ENCODE measurements at regions of chr20 and their contacts with region 1.

Region 1: DNA sequence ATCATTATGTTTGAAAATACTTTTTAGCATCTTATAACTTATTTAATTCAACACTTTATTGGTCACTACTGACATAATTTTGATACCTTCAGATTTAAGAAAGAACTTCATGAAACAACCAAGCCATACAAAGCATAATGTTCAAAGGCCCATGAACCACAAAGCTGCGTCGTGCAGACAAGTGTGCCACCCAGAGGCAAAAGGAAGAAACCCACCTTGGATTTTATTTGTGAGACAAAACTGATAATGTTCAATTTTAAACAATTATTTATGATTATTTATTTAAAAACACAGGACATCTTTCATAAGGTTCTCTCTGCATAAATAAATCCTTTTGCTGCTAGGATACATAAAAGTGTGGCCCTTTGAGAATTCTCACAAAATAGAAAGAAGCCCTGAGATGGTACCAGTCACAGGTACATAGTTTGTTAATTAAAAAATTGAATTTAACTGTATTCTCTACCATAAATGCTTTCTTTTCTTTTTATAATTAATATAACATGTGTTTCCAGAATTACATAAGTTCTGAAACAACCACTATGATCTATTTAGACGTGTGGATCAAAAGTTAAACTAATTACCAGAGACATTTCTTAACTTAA is 143.7 kb downstream of the RALGAPA2 start:
- DNase-seq: no peak
- ATAC-seq: peak in 2 of 4 donors; percentile 41 to 56
- H3K4me3 ChIP-seq: no peak overlapping the region
- H3K27ac ChIP-seq: no peak overlapping the region
- H3K4me1 ChIP-seq: no peaks in the 10 kb centered on the region
- H3K27me3 ChIP-seq: no peaks in the 10 kb centered on the region
- CTCF ChIP-seq: peak; percentile 61

Region 2: GRCh38 chr20:20039752-20040387 is 528.8 kb before region 1 on chr20:
- intact Hi-C with region 1: loop called in 1 of 2 experiments (anchors 10 kb)
- DNase-seq: no peak
- ATAC-seq: no peak
- H3K4me3 ChIP-seq: no peak overlapping the region
- H3K27ac ChIP-seq: no peak overlapping the region
- H3K4me1 ChIP-seq: no peaks in the 10 kb centered on the region
- H3K27me3 ChIP-seq: no peaks in the 10 kb centered on the region
- CTCF ChIP-seq: no peak

Region 3: DNA sequence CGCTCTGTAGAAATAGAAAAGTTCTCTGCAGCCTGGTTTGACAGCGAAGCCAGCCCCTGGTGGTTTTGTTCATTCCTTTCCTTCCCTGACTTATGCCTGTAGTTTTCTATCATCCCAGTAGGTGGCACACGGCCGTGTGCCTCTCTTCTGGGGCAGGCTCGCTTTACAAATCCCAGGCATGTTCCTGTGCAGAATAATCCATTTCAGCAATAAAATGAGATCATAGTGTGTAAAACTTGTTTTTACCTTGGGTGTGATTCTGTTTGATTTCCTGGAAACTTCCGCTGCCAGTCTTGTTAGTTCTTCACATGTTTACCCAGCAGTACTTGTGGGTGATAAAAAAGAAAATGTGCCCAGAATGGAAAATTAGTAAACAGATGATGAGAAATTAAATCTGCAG is 208.2 kb before region 1 on chr20:
- intact Hi-C with region 1: loop called in 1 of 2 experiments (anchors 10 kb)
- DNase-seq: no peak
- ATAC-seq: peak; percentile 48 to 86 (median 78)
- H3K4me3 ChIP-seq: no peak overlapping the region
- H3K27ac ChIP-seq: no peak overlapping the region
- H3K4me1 ChIP-seq: no peaks in the 10 kb centered on the region
- H3K27me3 ChIP-seq: peaks cover 1 to 48% (median 23%) of the 10 kb centered on the region in 3 donors
- CTCF ChIP-seq: peak; percentile 61

Region 4: DNA sequence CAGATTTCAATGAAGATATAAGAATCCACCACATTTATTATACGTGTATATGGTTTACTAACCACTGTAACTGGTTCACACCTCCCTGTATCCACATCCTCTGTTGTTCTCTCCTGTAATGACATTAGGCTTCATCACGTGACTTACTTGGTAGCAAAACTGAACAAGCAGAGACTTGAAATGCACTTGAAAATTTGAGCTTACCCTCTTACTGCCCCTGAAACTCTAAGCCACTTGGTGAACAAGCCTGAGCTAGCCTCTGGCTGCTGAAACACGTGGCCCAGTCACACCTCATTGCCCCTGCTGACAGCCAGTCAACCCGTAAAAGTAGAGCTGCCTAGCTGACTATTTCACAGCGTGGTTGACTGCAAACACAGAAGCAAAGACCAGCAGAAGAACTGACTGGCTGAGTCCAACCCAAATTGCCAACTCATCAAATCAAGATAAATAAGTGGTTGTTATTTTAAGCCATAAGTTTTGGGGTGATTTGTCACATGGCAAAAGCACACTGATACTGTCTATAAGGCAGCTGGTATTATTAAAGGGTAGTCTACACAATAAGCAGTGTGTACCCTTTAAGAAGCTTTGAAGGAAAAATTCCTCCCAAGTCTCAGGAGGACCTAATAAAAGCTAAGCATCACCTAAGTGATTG is 34.8 kb after region 1 on chr20:
- intact Hi-C with region 1: no loop called
- DNase-seq: no peak
- ATAC-seq: peak in 2 of 4 donors; percentile 28 to 83
- H3K4me3 ChIP-seq: no peak overlapping the region
- H3K27ac ChIP-seq: peak overlapping the region; percentile 30
- H3K4me1 ChIP-seq: no peaks in the 10 kb centered on the region
- H3K27me3 ChIP-seq: no peaks in the 10 kb centered on the region
- CTCF ChIP-seq: no peak

Measured in psoas muscle (tissue), 8 donors.